Caco-2 (cell line): ENCODE measurements at regions of chr5 and their contacts with region 1.

Region 1: DNA sequence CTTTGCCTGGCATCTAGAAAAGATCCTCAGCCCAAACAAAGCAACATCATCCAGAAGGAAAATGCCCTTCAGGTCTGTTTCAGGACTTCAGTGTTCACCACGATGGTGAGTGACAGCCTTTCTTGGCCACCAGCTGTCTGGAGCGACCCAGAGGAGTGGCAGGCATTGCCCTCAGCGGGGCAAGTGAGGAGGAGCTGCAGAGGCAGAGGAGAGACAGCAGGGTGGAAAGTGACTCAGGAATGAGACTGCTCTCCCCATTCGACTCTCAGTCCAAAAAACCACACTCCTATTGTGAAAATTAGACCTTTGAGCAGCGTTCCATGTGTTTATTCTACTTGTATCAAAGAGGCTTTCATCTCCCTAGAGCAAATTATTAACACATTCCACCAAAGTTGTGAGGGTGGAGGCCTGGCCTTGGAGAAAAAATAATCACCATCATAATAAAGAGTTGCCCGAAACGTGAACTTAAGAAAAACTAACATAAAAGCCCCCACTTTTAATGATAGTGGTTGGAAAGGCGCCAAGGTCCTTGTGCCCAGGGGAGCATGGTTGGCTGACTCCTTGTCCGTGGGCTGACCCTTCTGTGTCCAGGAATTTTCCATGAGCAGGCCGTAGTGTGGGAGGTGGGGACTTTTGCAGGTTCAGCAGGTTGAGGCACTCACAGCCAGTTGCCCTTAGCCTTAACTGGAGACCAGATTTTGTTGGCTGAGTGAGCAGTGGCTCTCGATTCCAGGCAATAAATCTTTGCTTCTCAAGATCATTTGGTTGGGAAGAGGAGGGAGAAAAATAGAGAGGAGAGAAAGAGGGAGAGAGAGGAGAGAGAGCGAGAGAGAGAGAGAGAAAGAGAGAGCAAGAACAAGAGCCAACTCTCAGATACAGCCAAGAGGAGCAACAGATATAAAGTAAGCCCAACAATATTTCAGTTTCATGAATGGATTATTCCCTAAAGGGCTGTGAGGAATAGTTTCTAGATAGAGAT is 125.9 kb upstream of the ANKRD55 start:
- DNase-seq: peak; percentile 91 to 96
- H3K4me3 ChIP-seq: no peak overlapping the region
- H3K4me3 Mint-ChIP-seq: peak overlapping the region; percentile 68
- H3K27ac Mint-ChIP-seq: peak overlapping the region; percentile 85
- H3K4me1 ChIP-seq: peaks cover 61% of the 10 kb centered on the region
- H3K4me1 Mint-ChIP-seq: peaks cover 50% of the 10 kb centered on the region
- H3K27me3 ChIP-seq: no peaks in the 10 kb centered on the region
- H3K27me3 Mint-ChIP-seq: no peaks in the 10 kb centered on the region
- CTCF ChIP-seq: no peak

Region 2: GRCh38 chr5:55936100-55936693 is 422.8 kb before region 1 on chr5:
- CTCF ChIA-PET with region 1: no interaction called
- POLR2A ChIA-PET with region 1: no interaction called
- intact Hi-C with region 1: loop called (anchors 1 kb)
- DNase-seq: peak; percentile 87
- H3K4me3 ChIP-seq: no peak overlapping the region
- H3K4me3 Mint-ChIP-seq: no peak overlapping the region
- H3K27ac Mint-ChIP-seq: peak overlapping the region; percentile 100
- H3K4me1 ChIP-seq: peaks cover 44% of the 10 kb centered on the region
- H3K4me1 Mint-ChIP-seq: peaks cover 48% of the 10 kb centered on the region
- H3K27me3 ChIP-seq: no peaks in the 10 kb centered on the region
- H3K27me3 Mint-ChIP-seq: no peaks in the 10 kb centered on the region
- CTCF ChIP-seq: peak; percentile 85 to 95

Region 3: DNA sequence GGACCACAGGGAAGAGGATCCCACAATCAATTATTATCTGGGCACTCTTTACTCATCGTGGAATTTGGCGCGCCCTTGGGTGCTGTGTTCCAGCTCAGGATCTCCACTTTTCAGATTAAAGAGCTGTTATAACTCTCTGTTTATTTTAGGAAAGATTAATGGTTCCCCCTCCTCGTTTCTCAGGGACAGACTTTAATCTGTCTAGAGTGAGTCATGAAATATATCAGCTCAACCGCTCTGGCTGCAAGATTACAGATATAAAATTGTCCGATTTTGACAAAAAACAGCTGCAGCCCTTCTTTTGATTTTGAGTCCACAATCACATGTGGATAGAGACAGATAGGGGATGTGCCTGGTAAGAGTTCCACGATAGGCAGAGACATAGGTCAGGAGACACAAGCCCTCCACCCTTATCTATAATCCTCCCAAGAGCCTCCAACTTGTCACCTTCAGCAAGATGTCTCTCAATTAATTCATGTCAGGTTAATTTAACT is 48.2 kb before region 1 on chr5:
- CTCF ChIA-PET with region 1: no interaction called
- POLR2A ChIA-PET with region 1: no interaction called
- intact Hi-C with region 1: loop called (anchors 1 kb)
- DNase-seq: no peak
- H3K4me3 ChIP-seq: no peak overlapping the region
- H3K4me3 Mint-ChIP-seq: no peak overlapping the region
- H3K27ac Mint-ChIP-seq: peak overlapping the region; percentile 34
- H3K4me1 ChIP-seq: peaks cover 71% of the 10 kb centered on the region
- H3K4me1 Mint-ChIP-seq: peaks cover 55% of the 10 kb centered on the region
- H3K27me3 ChIP-seq: no peaks in the 10 kb centered on the region
- H3K27me3 Mint-ChIP-seq: no peaks in the 10 kb centered on the region
- CTCF ChIP-seq: no peak

Region 4: DNA sequence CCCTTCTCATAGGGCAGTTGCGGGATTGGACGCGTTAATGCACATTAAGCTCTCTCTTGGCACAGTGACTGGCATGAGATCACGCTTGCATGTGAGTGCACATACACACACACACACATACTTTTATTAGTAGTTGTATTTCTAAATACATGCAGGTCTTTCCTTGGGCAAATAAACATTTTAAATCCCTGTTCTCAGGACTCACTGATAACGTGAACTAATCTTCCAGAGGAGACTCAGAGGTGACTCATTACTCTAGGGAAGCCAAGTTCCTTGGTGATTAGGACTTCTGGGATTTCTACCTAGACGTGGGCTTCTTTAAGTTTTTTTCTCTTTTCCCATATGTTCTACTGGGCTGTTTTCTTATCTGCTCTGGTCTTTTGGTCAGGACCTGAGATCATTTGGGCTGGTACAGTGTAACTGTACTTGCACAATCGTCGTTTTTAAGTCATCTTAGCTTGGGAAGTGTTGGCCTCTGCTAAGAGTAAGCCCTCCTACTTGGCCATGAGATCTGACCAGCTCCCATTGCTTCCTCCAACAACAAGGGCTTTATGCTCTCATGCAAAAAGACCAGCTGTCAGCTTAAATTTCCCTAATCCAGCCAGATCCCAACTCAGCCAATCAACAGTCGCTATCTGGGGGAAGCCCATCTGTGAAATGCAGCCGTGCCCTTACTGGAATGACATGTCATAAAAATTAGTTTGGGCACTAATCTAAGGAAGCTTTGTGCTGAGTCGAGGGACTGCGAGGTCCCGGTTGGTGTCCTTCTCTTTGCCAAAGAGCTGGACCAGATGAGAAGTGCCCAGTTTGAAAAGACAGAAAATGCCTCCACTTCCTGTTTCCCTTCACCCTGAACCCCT is 50.6 kb after region 1 on chr5:
- CTCF ChIA-PET with region 1: no interaction called
- POLR2A ChIA-PET with region 1: interaction called, 3 read pairs
- intact Hi-C with region 1: loop called (anchors 1 kb)
- DNase-seq: peak; percentile 31 to 62
- H3K4me3 ChIP-seq: no peak overlapping the region
- H3K4me3 Mint-ChIP-seq: peak overlapping the region; percentile 2
- H3K27ac Mint-ChIP-seq: peak overlapping the region; percentile 77
- H3K4me1 ChIP-seq: peaks cover 96% of the 10 kb centered on the region
- H3K4me1 Mint-ChIP-seq: peaks cover 61% of the 10 kb centered on the region
- H3K27me3 ChIP-seq: no peaks in the 10 kb centered on the region
- H3K27me3 Mint-ChIP-seq: no peaks in the 10 kb centered on the region
- CTCF ChIP-seq: no peak

Region 5: DNA sequence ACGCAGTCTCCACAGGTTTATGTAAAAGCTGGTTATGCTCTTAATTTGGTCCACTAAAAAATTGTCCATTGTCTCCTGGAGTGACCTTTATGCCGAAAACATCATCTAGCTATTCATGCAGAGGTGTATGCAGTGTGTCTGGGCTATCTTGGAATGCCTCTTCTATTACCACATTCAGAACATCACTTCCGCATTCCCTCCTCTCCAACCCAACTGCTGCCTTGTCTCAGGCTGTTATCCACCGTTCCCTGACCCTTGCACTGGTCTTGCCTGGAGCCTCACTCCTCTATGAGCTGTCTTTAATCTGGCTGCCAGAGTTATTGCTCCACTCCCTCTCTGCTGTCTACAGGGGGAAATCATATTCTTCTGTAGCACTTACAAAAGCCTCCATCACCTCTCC is 88.2 kb after region 1 on chr5:
- CTCF ChIA-PET with region 1: interaction called, 5 read pairs
- POLR2A ChIA-PET with region 1: interaction called, 9 read pairs
- intact Hi-C with region 1: loop called (anchors 1 kb)
- DNase-seq: peak; percentile 92 to 97
- H3K4me3 ChIP-seq: no peak overlapping the region
- H3K4me3 Mint-ChIP-seq: peak overlapping the region; percentile 28
- H3K27ac Mint-ChIP-seq: peak overlapping the region; percentile 81
- H3K4me1 ChIP-seq: peaks cover 52% of the 10 kb centered on the region
- H3K4me1 Mint-ChIP-seq: peaks cover 23% of the 10 kb centered on the region
- H3K27me3 ChIP-seq: no peaks in the 10 kb centered on the region
- H3K27me3 Mint-ChIP-seq: no peaks in the 10 kb centered on the region
- CTCF ChIP-seq: no peak

Region 6: GRCh38 chr5:56506211-56506965 is 147.4 kb after region 1 on chr5:
- CTCF ChIA-PET with region 1: no interaction called
- POLR2A ChIA-PET with region 1: no interaction called
- intact Hi-C with region 1: loop called (anchors 1 kb)
- DNase-seq: peak; percentile 78 to 89
- H3K4me3 ChIP-seq: no peak overlapping the region
- H3K4me3 Mint-ChIP-seq: peak overlapping the region; percentile 4
- H3K27ac Mint-ChIP-seq: peak overlapping the region; percentile 35
- H3K4me1 ChIP-seq: peaks cover 69% of the 10 kb centered on the region
- H3K4me1 Mint-ChIP-seq: peaks cover 53% of the 10 kb centered on the region
- H3K27me3 ChIP-seq: no peaks in the 10 kb centered on the region
- H3K27me3 Mint-ChIP-seq: no peaks in the 10 kb centered on the region
- CTCF ChIP-seq: no peak

Region 7: GRCh38 chr5:56710826-56711590 is 352.0 kb after region 1 on chr5:
- CTCF ChIA-PET with region 1: no interaction called
- POLR2A ChIA-PET with region 1: no interaction called
- intact Hi-C with region 1: no loop called
- DNase-seq: no peak
- H3K4me3 ChIP-seq: no peak overlapping the region
- H3K4me3 Mint-ChIP-seq: no peak overlapping the region
- H3K27ac Mint-ChIP-seq: no peak overlapping the region
- H3K4me1 ChIP-seq: peaks cover 14% of the 10 kb centered on the region
- H3K4me1 Mint-ChIP-seq: peaks cover 21% of the 10 kb centered on the region
- H3K27me3 ChIP-seq: no peaks in the 10 kb centered on the region
- H3K27me3 Mint-ChIP-seq: no peaks in the 10 kb centered on the region
- CTCF ChIP-seq: no peak

Region 8: GRCh38 chr5:56838409-56839039 is 479.5 kb after region 1 on chr5:
- CTCF ChIA-PET with region 1: no interaction called
- POLR2A ChIA-PET with region 1: no interaction called
- intact Hi-C with region 1: loop called (anchors 5 kb)
- DNase-seq: peak in 1 of 2 experiments; percentile 39
- H3K4me3 ChIP-seq: no peak overlapping the region
- H3K4me3 Mint-ChIP-seq: no peak overlapping the region
- H3K27ac Mint-ChIP-seq: peak overlapping the region; percentile 22
- H3K4me1 ChIP-seq: peaks cover 43% of the 10 kb centered on the region
- H3K4me1 Mint-ChIP-seq: peaks cover 45% of the 10 kb centered on the region
- H3K27me3 ChIP-seq: no peaks in the 10 kb centered on the region
- H3K27me3 Mint-ChIP-seq: no peaks in the 10 kb centered on the region
- CTCF ChIP-seq: peak; percentile 36 to 53